ENCODE measurements at regions of chr20 and their contacts with region 1.

Region 1: DNA sequence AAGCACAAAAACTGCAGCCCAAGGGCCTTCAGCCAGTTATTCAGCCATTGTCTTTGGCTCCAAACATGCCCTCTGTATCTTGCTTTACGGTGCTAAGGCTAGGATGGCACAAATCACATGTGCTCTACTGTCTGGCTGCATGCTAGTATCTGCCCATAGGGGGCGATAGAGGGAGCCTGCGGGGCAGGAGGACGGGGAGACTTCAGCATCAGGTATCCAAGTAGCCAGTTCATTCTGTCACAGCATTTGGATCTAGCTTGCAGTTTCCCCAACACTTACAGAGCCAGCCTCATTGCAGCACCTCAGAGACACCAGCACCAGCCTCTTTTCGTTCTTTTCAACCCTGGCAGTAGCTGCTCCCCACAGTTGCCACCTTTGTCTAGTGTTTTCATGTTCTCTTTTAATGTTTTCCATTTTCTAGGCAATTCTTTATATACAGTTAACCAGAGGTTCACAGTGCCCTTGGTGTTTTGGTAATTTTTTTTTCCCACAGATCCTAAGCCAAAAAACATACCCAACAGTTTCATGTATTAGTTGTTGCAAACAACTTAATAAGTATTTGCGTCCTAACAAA is 705.9 kb downstream of the PTPRT start:
- DNase-seq: peak in 2 of 10 donors; percentile 22 to 35

Region 2: DNA sequence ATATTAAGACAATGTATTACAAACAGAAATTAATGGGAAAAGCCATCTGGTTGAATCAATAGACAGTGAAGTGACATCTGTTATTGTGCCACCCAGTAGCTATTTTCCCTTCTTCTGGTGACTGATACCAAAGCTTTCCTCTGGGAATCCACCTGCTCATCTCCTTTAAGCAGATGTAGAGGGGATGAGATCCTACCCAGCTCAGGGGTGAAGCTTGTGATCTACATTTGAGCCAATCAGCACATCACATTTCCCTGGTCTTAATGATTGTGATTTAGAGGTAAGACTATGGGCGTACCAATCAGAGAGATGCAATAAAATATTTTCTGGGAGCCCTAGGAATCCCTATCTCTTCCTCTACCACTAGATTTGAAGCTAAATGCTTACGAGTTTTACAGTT is 77.0 kb before region 1 on chr20:
- intact Hi-C with region 1: no loop called
- DNase-seq: no peak

Region 3: GRCh38 chr20:42754706-42755105 is 270.9 kb after region 1 on chr20:
- intact Hi-C with region 1: loop called (anchors 5 kb)
- DNase-seq: no peak

Measured in posterior cingulate gyrus (tissue), 11 donors.